PC-3 (cell line): ENCODE measurements at regions of chr17 and their contacts with region 1.

Region 1: GRCh38 chr17:28967221-28968140 is 16.2 kb upstream of the PHF12 start:
- DNase-seq: no peak
- ATAC-seq: no peak
- H3K4me3 ChIP-seq: no peak overlapping the region
- H3K27ac ChIP-seq: no peak overlapping the region
- H3K4me1 ChIP-seq: no peaks in the 10 kb centered on the region
- H3K27me3 ChIP-seq: peaks cover 8% of the 10 kb centered on the region
- CTCF ChIP-seq: no peak

Region 2: DNA sequence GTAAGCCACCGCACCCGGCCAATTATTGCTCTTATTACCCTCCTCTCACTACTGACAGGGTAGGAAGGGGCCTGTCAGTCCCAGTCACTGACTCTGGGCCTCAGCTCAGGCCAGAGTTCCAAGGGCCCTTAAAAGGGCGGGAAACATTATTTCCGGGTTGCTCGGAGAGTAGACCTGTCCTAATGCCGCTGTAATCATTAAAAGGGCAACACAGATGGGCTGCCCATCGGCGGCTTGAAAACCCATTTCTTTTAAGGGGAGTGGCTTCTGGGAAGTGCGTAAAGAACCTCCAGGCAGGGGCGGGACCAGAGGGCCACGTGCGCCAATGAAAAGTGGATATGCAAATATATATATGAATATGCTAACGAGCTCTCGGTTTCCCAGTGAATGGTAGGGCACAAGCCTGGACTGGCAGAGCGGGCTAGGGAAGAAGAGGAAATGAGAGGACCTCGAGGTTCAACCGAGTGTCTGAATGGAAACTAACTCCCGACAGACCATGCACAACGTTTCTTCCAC is 102.1 kb after region 1 on chr17:
- CTCF ChIA-PET with region 1: no interaction called
- POLR2A ChIA-PET with region 1: no interaction called
- intact Hi-C with region 1: no loop called
- DNase-seq: no peak
- ATAC-seq: no peak
- H3K4me3 ChIP-seq: no peak overlapping the region
- H3K27ac ChIP-seq: no peak overlapping the region
- H3K4me1 ChIP-seq: no peaks in the 10 kb centered on the region
- H3K27me3 ChIP-seq: no peaks in the 10 kb centered on the region
- CTCF ChIP-seq: no peak

Region 3: DNA sequence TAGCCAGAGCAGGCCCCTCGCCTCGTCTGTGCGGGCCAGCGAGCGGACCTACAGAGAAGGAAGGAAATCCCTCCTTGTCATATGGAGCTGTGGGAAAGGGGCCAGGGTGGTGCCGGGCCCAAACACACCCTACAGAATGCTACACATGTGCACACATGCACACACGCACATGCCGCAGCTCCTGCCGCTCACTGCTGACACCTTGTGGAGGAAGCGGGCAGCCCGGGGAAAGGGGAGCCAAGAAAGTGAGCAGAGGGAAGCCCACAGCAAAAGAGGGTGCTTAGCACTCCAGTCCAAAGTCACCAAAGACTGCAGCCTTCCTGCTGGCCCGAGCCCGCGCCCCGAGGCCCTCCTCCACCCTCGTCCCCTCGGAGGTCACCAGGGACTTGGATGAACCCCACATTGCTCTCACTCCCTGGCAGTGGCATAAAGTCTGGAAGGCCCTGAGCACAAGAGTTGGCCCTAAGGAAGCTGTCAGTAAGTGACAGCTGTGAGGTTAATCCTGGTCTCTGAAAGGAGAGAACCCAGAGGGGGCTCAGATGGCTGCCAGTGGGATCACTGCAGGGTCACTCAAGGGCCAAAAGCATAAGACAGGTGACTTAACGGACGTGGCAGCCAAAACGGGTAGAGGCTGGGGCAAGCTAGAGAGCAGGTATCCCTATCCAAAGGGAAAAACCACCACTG is 144.5 kb after region 1 on chr17:
- CTCF ChIA-PET with region 1: interaction called, 45 read pairs
- POLR2A ChIA-PET with region 1: no interaction called
- intact Hi-C with region 1: loop called (anchors 1 kb)
- DNase-seq: peak; percentile 60
- ATAC-seq: peak; percentile 67
- H3K4me3 ChIP-seq: no peak overlapping the region
- H3K27ac ChIP-seq: no peak overlapping the region
- H3K4me1 ChIP-seq: peaks cover 14% of the 10 kb centered on the region
- H3K27me3 ChIP-seq: no peaks in the 10 kb centered on the region
- CTCF ChIP-seq: peak; percentile 80

Region 4: DNA sequence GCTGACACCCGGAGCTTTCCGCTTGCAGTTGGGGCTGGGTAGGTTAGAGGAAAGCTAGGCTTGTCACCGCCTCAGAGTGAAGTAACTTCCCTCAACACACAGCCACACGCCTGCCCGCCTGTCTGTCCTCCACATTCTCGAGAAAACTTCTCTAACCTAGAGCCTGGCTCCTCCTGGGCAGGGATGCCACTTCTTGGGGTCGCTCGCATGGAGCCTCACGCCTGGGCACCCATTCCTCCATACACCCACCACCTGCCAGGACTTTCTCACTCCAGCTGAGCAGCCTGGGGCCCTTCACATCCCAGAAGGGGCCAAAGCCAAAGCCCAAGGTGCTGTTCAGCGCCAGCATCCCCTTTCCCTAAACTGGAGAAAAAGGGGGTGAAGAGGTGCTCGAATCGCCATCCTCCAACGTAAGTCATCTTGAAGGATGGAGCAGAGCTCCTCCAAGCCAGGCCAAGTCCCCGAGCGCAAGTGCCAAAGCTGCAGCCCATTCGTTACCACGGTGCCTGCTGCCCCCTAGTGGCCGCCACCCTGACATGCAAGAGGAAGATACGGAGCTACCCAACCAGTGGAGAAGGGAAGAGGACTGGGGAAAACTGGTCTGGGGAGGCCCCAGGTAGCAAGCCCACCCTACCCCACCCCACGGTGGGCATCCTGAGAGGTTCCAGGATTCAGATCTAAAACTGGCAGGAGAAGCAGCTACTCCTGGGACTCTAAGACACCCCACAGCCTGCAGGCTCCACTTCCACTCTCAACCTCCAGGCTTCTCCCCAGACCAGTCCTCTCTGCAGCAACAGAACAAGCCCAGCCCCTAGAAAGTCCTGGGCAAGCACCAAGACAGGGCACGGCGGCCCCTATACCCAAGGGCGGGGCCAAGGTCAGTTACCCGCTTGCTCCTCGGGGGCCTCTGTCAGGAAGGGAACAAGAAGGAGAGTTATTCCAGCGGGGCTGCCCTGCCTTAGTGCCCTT is 149.6 kb after region 1 on chr17:
- CTCF ChIA-PET with region 1: interaction called, 45 read pairs
- POLR2A ChIA-PET with region 1: no interaction called
- intact Hi-C with region 1: loop called (anchors 2 kb)
- DNase-seq: peak; percentile 49
- ATAC-seq: peak; percentile 66
- H3K4me3 ChIP-seq: no peak overlapping the region
- H3K27ac ChIP-seq: no peak overlapping the region
- H3K4me1 ChIP-seq: no peaks in the 10 kb centered on the region
- H3K27me3 ChIP-seq: no peaks in the 10 kb centered on the region
- CTCF ChIP-seq: peak; percentile 84

Region 5: DNA sequence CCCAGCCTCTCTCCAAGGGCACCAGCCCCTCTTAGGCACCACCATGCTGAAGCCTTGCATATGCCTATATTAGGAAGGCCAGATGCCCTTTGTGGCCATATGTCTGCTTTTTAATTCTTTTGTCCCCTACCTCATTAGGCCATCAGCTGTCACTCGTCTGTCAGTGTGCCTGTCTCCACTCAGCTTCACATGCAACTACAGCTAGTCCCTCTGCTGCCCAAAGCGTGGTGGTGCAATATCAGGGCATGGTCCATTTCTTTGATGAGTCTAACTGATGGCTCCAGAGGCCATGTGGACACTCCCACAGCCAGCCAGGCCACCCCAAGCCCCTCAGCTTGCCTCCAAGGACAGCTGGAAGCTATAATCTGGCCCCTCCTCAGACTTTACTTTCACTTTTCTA is 176.4 kb after region 1 on chr17:
- CTCF ChIA-PET with region 1: interaction called, 12 read pairs
- POLR2A ChIA-PET with region 1: no interaction called
- intact Hi-C with region 1: no loop called
- DNase-seq: peak; percentile 37
- ATAC-seq: no peak
- H3K4me3 ChIP-seq: no peak overlapping the region
- H3K27ac ChIP-seq: no peak overlapping the region
- H3K4me1 ChIP-seq: peaks cover 11% of the 10 kb centered on the region
- H3K27me3 ChIP-seq: no peaks in the 10 kb centered on the region
- CTCF ChIP-seq: peak; percentile 52

Region 6: DNA sequence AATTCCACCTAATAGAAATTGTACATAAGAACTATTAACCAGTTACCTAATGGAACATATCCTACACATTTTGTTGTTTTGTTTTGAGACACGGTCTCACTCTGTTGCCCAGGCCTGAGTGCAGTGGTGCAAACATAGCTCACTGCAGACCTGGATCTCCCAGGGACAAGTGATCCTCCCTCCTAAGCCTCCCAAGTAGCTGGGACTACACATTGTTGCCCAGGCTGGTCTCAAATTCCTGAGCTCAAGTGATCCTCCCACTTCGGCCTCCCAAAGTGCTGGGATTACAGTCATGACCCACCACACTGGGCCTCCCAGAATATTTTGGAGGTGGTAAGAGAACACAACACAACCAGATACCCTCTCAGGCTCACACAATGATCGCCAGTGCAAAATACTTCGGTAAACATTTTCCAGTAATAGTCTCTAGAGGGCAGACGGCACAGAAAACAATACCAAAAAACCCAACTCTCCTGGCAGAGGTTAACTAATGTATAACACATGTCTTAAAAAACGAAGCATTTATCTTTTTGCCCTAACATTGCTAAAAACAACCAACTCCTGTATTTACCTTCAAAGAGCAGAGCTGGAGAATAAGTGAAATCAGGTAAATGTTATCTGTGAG is 315.9 kb after region 1 on chr17:
- CTCF ChIA-PET with region 1: interaction called, 25 read pairs
- POLR2A ChIA-PET with region 1: no interaction called
- intact Hi-C with region 1: no loop called
- DNase-seq: no peak
- ATAC-seq: no peak
- H3K4me3 ChIP-seq: no peak overlapping the region
- H3K27ac ChIP-seq: no peak overlapping the region
- H3K4me1 ChIP-seq: no peaks in the 10 kb centered on the region
- H3K27me3 ChIP-seq: no peaks in the 10 kb centered on the region
- CTCF ChIP-seq: 0 out of 2 replicates have a peak, but pooled peaks have one; percentile 22